Caco-2 (cell line): ENCODE measurements at regions of chr20 and their contacts with region 1.

Region 1: GRCh38 chr20:46307139-46307998 is 929 bp downstream of the CDH22 start:
- DNase-seq: peak; percentile 76 to 85
- H3K4me3 ChIP-seq: peak overlapping the region; percentile 46
- H3K4me3 Mint-ChIP-seq: peak overlapping the region; percentile 45
- H3K27ac Mint-ChIP-seq: no peak overlapping the region
- H3K4me1 ChIP-seq: peaks cover 15% of the 10 kb centered on the region
- H3K4me1 Mint-ChIP-seq: peaks cover 15% of the 10 kb centered on the region
- H3K27me3 ChIP-seq: peaks cover 22% of the 10 kb centered on the region
- H3K27me3 Mint-ChIP-seq: peaks cover 50% of the 10 kb centered on the region
- CTCF ChIP-seq: peak; percentile 97 to 99

Region 2: GRCh38 chr20:45919542-45920399 is 387.6 kb before region 1 on chr20:
- CTCF ChIA-PET with region 1: no interaction called
- POLR2A ChIA-PET with region 1: no interaction called
- intact Hi-C with region 1: no loop called
- DNase-seq: no peak
- H3K4me3 ChIP-seq: no peak overlapping the region
- H3K4me3 Mint-ChIP-seq: no peak overlapping the region
- H3K27ac Mint-ChIP-seq: no peak overlapping the region
- H3K4me1 ChIP-seq: peaks cover 24% of the 10 kb centered on the region
- H3K4me1 Mint-ChIP-seq: peaks cover 7% of the 10 kb centered on the region
- H3K27me3 ChIP-seq: no peaks in the 10 kb centered on the region
- H3K27me3 Mint-ChIP-seq: no peaks in the 10 kb centered on the region
- CTCF ChIP-seq: no peak

Region 3: DNA sequence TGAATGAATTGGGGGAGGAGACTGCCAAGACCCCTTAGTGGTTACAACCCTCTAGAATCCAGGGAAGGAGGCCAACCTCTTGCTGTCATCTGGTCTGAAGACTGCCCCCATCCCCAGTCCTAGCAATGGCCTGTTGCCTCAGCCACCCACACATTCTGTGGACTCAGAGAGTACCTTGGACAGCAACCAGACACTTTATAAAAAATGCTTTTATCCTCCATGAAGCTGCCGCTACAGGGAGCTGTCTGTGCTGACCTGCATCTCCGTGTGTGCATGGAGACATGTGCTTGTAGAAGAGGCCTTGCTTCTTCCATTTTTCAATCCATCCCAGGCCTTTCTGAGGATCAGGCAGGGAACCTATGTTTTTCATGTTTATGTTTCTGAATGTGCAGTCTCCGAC is 14.3 kb before region 1 on chr20:
- CTCF ChIA-PET with region 1: interaction called, 10 read pairs
- POLR2A ChIA-PET with region 1: no interaction called
- intact Hi-C with region 1: loop called (anchors 1 kb)
- DNase-seq: peak; percentile 69 to 80
- H3K4me3 ChIP-seq: no peak overlapping the region
- H3K4me3 Mint-ChIP-seq: no peak overlapping the region
- H3K27ac Mint-ChIP-seq: no peak overlapping the region
- H3K4me1 ChIP-seq: no peaks in the 10 kb centered on the region
- H3K4me1 Mint-ChIP-seq: no peaks in the 10 kb centered on the region
- H3K27me3 ChIP-seq: peaks cover 4% of the 10 kb centered on the region; the same call in 1 of the 2 replicates
- H3K27me3 Mint-ChIP-seq: peaks cover 22% of the 10 kb centered on the region
- CTCF ChIP-seq: no peak

Region 4: GRCh38 chr20:46349035-46349741 is 41.8 kb after region 1 on chr20:
- CTCF ChIA-PET with region 1: interaction called, 32 read pairs
- POLR2A ChIA-PET with region 1: no interaction called
- intact Hi-C with region 1: loop called (anchors 1 kb)
- DNase-seq: peak in 1 of 2 experiments; percentile 81
- H3K4me3 ChIP-seq: no peak overlapping the region
- H3K4me3 Mint-ChIP-seq: no peak overlapping the region
- H3K27ac Mint-ChIP-seq: no peak overlapping the region
- H3K4me1 ChIP-seq: peaks cover 17% of the 10 kb centered on the region
- H3K4me1 Mint-ChIP-seq: peaks cover 25% of the 10 kb centered on the region
- H3K27me3 ChIP-seq: no peaks in the 10 kb centered on the region; the same call in 1 of the 2 replicates
- H3K27me3 Mint-ChIP-seq: peaks cover 6% of the 10 kb centered on the region
- CTCF ChIP-seq: peak; percentile 91 to 92

Region 5: DNA sequence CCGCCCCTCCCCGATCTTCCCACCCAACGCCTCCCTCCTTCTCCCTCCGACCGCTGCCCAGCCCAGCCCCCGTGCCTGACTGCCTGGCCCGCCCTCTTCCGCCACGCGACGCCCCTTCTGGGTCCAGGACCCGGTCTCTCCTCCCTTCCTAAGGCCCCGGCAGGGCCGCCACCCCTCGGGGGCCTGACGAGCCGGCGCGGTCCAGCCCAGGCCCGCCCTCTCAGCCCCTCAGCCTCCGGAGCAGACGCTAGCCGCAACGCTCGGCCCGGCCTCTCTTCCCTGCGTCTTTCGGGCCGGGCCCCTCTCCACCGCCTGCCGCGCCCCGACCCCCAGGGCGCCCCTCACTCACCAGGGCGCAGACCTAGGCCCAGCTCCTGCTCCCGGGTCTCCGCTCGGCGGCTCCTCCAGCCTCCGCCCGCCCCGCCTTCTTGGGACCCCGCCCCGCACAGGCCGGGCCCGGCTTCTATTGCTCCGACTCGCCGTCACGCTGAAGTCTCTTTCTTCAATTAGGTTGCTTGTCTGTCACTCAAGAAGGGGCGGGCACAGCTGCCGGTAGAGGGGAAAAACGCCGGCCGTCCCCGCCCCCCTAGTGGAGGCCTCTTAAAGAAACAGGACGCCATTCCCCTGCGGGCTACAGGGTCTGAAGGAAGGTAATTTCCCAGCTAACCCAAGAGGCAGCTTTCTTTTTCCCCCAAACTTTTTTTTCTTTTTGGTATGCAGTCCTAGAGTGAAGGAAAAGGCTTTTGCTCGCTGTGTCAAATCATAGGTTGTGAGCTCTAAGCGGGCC is 99.0 kb after region 1 on chr20 and contains the start of gene ELMO2:
- CTCF ChIA-PET with region 1: interaction called, 23 read pairs
- POLR2A ChIA-PET with region 1: no interaction called
- intact Hi-C with region 1: loop called (anchors 1 kb)
- DNase-seq: peak; percentile 99 to 100
- H3K4me3 ChIP-seq: peak within 1 kb of the TSS; percentile 55
- H3K4me3 Mint-ChIP-seq: peak within 1 kb of the TSS; percentile 82
- H3K27ac Mint-ChIP-seq: peak within 1 kb of the TSS; percentile 79
- H3K4me1 ChIP-seq: peaks cover 23% of the 10 kb centered on the region
- H3K4me1 Mint-ChIP-seq: peaks cover 8% of the 10 kb centered on the region
- H3K27me3 ChIP-seq: no peaks in the 10 kb centered on the region
- H3K27me3 Mint-ChIP-seq: peaks cover 4% of the 10 kb centered on the region
- CTCF ChIP-seq: peak; percentile 12 to 48
- total RNA-seq, gene ELMO2: 75.0 and 82.4 TPM in 2 replicates

Region 6: GRCh38 chr20:46438156-46438750 is 130.9 kb after region 1 on chr20:
- CTCF ChIA-PET with region 1: interaction called, 29 read pairs
- POLR2A ChIA-PET with region 1: no interaction called
- intact Hi-C with region 1: no loop called
- DNase-seq: peak in 1 of 2 experiments; percentile 60
- H3K4me3 ChIP-seq: no peak overlapping the region
- H3K4me3 Mint-ChIP-seq: no peak overlapping the region
- H3K27ac Mint-ChIP-seq: no peak overlapping the region
- H3K4me1 ChIP-seq: no peaks in the 10 kb centered on the region
- H3K4me1 Mint-ChIP-seq: no peaks in the 10 kb centered on the region
- H3K27me3 ChIP-seq: no peaks in the 10 kb centered on the region; the same call in 1 of the 2 replicates
- H3K27me3 Mint-ChIP-seq: peaks cover 15% of the 10 kb centered on the region
- CTCF ChIP-seq: peak; percentile 32 to 61